Thyroid gland (tissue), 4 donors: ENCODE measurements at regions of chr6 and their contacts with region 1.

Region 1: DNA sequence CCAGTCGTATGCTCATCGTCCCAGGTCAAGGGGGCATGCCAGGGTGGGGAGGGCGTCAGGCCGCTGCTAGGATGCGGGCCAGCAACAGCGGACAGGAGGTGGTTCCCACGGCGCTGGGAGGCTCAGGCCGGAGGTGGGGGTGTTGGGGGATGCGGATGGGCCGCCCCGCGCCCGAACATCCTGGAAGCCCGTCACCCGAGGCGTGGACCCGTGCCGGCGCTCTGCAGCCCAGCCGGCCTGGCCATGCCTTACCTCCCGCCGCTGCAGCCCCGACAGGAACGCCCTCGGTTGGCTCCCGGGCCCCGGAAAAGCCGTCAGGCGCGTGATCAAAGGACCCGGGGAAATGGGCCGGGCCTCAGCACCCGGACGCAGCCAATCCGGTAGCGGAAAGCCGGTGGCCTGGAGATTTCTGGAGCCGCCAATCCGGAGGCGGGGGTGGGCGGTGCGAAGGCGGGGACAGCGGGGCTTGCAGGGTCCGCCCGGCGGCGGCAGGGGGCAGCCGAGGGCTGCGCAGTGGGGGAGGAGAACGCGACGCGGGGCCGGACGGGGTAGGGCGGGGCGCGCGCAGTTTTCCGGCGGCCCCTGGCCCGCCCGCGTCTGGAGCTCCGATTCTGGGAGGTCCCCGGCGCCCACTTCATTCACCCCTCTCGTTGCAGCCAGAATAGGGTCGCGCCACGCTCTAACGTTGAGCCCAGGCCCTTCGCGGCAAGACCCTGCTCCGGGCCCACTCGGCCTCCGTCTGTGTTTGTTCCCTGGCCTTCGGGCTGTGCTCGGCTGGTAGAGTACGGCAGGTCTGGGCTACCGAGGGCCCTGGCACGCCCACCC is at the start of gene SMIM29:
- DNase-seq: peak; percentile 96 to 98
- H3K4me3 ChIP-seq: peak within 1 kb of the TSS; percentile 23 to 83 (median 71)
- H3K27ac ChIP-seq: peak within 1 kb of the TSS; percentile 83 to 94 (median 92)
- H3K4me1 ChIP-seq: peaks cover 5 to 18% of the 10 kb centered on the region in 2 donors
- H3K27me3 ChIP-seq: no peaks in the 10 kb centered on the region
- CTCF ChIP-seq: peak; percentile 75 to 98 (median 96)
- POLR2A ChIP-seq: peak; percentile 49 to 89
- total RNA-seq, gene SMIM29: 23.4 to 46.2 (median 31.1) TPM

Region 2: DNA sequence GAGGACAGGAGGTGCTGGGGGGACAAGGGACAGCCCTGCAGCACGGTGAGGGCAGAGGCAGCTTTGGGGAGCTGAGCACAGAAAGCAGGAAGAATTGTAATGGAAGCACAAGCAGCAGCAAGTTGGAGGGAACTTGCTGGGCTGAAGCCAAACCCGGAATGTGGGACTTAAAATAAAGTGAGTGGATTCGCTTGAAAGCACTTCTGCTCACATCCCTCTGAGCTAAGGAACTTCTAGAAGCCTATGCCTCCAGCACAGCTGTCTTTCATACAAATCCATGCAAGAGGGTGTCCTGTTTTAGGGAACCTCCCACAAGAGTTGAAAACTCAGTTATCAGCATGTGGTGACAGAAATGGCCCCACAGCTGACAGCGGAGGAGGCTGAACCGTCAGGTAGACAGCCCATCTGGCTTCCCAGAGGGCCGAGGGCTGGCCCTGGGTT is 373.8 kb before region 1 on chr6:
- intact Hi-C with region 1: no loop called
- DNase-seq: peak; percentile 71 to 76
- H3K4me3 ChIP-seq: no peak overlapping the region
- H3K27ac ChIP-seq: no peak overlapping the region
- H3K4me1 ChIP-seq: peaks cover 0 to 9% of the 10 kb centered on the region in 2 donors
- H3K27me3 ChIP-seq: no peaks in the 10 kb centered on the region
- CTCF ChIP-seq: no peak
- POLR2A ChIP-seq: no peak

Region 3: DNA sequence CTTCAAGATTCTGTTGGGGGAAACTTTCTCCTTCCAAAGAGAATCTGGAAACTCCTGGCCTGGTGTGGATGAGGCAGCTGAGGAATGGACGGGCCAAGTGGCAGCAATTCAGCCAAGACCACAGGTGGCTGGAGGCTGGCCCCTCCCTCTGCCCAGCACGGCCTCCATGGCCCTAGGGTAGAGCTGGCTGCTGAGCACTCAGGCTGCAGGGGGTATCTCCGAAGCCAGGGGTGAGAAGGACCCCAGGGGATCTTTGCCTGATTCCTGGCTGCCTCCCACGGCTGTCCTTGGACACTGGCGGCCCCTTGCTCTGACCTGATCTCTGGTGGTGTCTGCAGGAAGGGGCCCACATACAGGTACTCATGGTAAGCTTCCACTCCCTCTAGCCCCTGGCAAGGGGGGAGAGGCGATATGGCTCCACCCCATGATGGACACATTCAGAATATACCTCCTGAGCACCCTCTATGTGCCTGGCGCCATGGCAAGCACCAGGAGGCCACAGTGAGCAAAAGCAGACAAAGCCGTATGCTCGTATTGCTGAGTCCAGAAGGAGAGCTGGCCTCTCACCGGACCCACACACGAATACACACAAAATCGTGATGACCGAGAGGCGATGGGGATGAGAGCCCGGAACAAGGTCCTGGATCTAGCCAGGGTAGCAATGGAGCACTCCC is 141.9 kb before region 1 on chr6:
- intact Hi-C with region 1: no loop called
- DNase-seq: no peak
- H3K4me3 ChIP-seq: no peak overlapping the region
- H3K27ac ChIP-seq: no peak overlapping the region
- H3K4me1 ChIP-seq: no peaks in the 10 kb centered on the region
- H3K27me3 ChIP-seq: no peaks in the 10 kb centered on the region
- CTCF ChIP-seq: no peak
- POLR2A ChIP-seq: no peak

Region 4: DNA sequence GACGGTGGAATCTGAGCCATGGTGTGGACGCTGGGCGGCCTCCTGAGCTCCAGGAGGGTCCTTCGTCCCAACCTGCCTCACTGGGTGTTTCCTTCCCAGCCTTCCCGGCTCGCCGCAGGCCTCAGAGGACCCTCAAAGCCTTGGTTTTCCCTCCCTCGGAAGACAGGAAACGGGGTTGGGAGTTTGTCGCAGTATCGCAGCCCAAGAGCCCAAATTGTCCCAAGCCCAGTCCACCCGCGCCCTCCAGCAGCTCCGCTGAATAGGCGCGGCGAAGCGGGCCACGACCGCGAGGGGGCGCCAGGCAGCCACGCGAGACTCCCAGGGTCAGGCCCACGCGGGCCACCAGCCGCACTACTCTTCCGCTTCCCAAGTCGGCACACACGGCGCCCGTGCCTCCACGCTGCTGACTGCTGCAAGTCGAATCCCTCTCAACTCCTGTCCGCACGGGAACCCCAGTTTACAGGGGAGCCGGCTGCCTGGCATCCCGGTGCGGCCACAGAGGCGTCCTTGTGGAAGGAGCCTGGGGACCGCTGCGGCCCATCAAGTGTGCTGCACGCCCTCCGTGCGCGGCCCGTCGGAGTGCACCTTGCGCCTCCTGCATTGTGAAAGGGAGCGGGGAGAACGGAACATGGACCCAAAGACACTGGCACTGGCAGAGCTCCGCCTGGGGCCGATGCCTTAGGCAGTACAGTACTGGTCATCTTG is 52.7 kb before region 1 on chr6:
- intact Hi-C with region 1: loop called (anchors 5 kb)
- DNase-seq: peak; percentile 88 to 89
- H3K4me3 ChIP-seq: peak overlapping the region; percentile 21 to 48 (median 31)
- H3K27ac ChIP-seq: no peak overlapping the region
- H3K4me1 ChIP-seq: peaks cover 2 to 4% of the 10 kb centered on the region in 2 donors
- H3K27me3 ChIP-seq: no peaks in the 10 kb centered on the region
- CTCF ChIP-seq: peak; percentile 78 to 98 (median 95)
- POLR2A ChIP-seq: no peak

Region 5: DNA sequence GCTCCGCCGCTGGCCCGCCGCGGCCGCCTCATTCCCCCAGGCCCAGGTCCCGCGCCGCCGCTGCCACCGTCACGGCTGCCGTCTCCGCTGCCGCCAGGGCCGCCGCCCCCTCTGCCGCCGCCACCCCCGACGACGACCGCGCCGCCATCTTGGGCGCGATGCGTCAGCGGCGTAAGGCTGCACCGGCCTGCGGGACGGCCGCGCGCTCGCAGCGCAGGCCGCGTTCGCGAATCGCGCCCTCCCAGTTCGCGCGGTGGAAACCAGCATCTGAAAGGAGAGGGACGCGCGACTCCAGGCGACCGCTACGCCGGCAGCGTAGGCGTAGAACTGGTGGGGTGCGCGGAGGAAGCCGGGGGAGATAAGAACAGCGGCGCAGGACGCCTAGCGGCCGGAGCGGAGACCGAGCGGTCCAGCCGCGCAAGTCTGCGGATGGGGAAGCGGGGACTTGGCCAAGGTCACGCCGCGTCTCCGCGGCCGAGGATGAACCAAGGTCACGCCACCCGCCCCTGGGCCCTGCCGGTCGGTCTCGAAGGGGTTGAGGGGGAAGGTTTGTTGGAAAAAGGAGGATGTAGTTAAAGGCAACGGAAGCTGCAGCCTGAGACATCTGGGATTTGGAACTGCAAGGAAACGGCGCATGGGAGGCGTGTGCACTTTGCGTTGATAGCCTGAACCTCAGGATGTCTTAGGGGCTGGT is 143.7 kb after region 1 on chr6 and contains the start of gene NUDT3:
- intact Hi-C with region 1: loop called (anchors 2 kb)
- DNase-seq: peak; percentile 94 to 97
- H3K4me3 ChIP-seq: peak within 1 kb of the TSS; percentile 74 to 94 (median 83)
- H3K27ac ChIP-seq: peak within 1 kb of the TSS; percentile 93 to 95 (median 93)
- H3K4me1 ChIP-seq: peaks cover 6 to 23% of the 10 kb centered on the region in 2 donors
- H3K27me3 ChIP-seq: no peaks in the 10 kb centered on the region
- CTCF ChIP-seq: peak; percentile 73 to 96 (median 82)
- POLR2A ChIP-seq: peak; percentile 73 to 92
- total RNA-seq, gene NUDT3: 68.1 to 98.9 (median 75.5) TPM

Region 6: DNA sequence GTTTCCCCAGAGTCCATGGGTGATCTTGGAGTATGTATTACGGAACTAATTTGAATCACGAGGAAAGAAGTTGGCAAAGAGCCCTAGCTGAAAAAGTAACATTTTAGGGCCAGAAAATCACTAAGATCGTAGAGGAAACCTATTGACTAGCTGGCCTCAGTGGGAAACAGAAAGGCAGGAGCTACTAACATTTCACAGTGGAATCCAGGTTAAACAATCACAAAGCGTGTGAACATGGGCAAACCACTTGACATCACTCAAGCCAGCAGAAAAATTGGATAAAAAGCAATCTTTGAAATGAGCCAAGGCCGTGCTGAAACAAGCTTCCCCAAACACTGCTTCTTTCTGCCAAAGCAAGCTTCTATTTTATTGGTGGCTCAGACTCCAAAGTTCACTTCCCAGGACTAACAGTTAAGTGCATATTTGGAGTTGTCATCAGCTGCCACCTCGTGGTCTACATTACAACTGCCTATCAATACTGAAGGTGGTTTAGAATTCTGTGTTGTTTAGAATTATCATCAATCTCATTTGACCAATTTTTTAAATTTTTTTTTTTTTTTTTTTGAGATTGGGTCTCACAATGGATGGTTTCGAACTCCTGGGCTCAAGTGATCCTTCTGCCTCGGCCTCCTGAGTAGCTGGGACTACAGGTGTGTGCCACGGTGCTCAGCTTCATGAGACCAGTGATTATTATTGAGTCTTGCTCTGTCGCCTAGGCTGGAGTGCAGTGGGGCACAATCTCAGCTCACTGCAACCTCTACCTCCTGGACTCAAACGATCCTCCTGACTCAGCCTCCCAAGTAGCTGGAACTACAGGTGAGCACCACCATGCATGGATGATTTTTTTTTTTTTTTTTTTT is 166.3 kb after region 1 on chr6:
- intact Hi-C with region 1: loop called (anchors 5 kb)
- DNase-seq: peak; percentile 68 to 69
- H3K4me3 ChIP-seq: no peak overlapping the region
- H3K27ac ChIP-seq: peak overlapping the region; percentile 29 to 75 (median 57)
- H3K4me1 ChIP-seq: peaks cover 0 to 14% of the 10 kb centered on the region in 2 donors
- H3K27me3 ChIP-seq: no peaks in the 10 kb centered on the region
- CTCF ChIP-seq: peak in 5 of 6 experiments; percentile 25 to 97 (median 88)
- POLR2A ChIP-seq: no peak